ENCODE measurements at regions of chr11 and their contacts with region 1.

Region 1: DNA sequence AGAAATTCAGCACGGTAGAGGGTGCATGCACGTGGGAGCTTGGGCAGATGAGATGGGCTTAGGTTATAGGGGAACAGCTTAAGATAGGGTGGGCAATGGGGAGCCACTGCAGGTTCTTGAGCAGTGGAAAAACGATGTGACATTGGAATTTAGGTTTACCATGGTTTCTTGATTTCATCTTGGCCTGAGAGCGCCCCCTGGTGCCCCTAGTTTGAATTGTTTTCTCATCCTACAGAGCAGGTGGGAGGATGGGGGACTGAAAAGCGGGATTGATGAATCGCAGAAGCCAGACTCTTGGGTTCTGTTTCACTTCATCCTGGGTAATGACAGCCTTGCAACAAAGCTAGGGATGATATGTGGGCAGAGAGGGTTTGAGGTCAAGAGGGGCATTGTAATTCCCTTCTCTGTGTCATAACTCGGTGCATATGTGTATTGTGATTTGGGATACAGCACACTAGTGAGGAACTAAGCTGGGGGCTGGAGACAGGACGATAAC is 6.7 kb upstream of the MCAM start:
- DNase-seq: peak; percentile 94
- H3K4me3 Mint-ChIP-seq: no peak overlapping the region
- H3K27ac Mint-ChIP-seq: no peak overlapping the region
- H3K4me1 Mint-ChIP-seq: peaks cover 20% of the 10 kb centered on the region
- H3K27me3 Mint-ChIP-seq: peaks cover 9% of the 10 kb centered on the region

Region 2: DNA sequence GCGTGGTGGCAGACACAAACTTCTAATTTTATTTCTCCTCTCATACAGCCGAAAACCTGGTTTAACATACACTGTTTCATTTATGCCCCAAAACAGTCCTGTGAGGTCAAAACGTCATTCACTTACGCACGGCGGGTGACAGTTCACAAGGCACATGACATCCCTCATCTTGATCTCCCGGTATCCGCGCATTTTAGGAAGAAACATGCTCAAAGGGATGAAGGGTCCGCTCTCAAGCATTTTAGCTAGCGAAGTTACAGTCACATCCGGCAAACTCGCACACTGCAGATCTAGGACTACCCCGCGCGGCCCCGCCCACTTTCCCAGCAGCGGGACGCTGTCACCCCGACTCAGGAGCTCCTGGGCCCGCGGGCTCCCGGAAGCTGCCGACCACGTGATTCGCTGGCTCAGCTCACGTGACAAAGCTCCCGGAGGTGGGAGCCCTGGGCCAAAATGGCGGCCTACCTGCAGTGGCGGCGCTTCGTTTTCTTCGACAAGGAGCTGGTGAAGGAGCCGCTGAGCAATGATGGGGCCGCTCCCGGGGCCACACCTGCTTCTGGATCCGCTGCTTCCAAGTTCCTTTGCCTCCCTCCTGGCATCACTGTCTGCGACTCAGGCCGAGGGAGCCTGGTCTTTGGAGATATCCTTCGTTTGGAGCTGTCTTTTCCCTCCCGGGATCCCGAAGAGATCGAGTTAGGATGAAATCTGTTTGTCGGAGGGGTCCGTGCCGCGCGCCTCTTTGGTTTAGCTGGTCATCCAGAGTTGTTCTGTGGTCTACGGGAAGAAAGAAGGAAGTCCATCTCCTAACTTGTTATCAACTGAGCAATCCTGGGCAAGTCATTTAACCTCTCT is 256.0 kb before region 1 on chr11 and contains the start of gene VPS11:
- intact Hi-C with region 1: loop called (anchors 5 kb)
- DNase-seq: peak; percentile 99
- H3K4me3 Mint-ChIP-seq: peak within 1 kb of the TSS; percentile 92
- H3K27ac Mint-ChIP-seq: peak within 1 kb of the TSS; percentile 93
- H3K4me1 Mint-ChIP-seq: peaks cover 22% of the 10 kb centered on the region
- H3K27me3 Mint-ChIP-seq: no peaks in the 10 kb centered on the region
- total RNA-seq, gene VPS11: 20.2 and 20.9 TPM in 2 replicates

Region 3: GRCh38 chr11:119144825-119145486 is 178.6 kb before region 1 on chr11:
- intact Hi-C with region 1: loop called (anchors 5 kb)
- DNase-seq: peak; percentile 74
- H3K4me3 Mint-ChIP-seq: no peak overlapping the region
- H3K27ac Mint-ChIP-seq: no peak overlapping the region
- H3K4me1 Mint-ChIP-seq: peaks cover 6% of the 10 kb centered on the region
- H3K27me3 Mint-ChIP-seq: peaks cover 42% of the 10 kb centered on the region

Region 4: GRCh38 chr11:119205574-119206510 is 117.7 kb before region 1 on chr11 and contains the start of gene CBL:
- intact Hi-C with region 1: loop called (anchors 5 kb)
- DNase-seq: peak; percentile 98
- H3K4me3 Mint-ChIP-seq: peak within 1 kb of the TSS; percentile 99
- H3K27ac Mint-ChIP-seq: peak within 1 kb of the TSS; percentile 93
- H3K4me1 Mint-ChIP-seq: peaks cover 18% of the 10 kb centered on the region
- H3K27me3 Mint-ChIP-seq: no peaks in the 10 kb centered on the region
- total RNA-seq, gene CBL: 36.4 and 36.5 TPM in 2 replicates

Region 5: GRCh38 chr11:119306373-119306890 is 17.2 kb before region 1 on chr11:
- intact Hi-C with region 1: loop called (anchors 1 kb)
- DNase-seq: peak; percentile 75
- H3K4me3 Mint-ChIP-seq: peak overlapping the region; percentile 65
- H3K27ac Mint-ChIP-seq: peak overlapping the region; percentile 89
- H3K4me1 Mint-ChIP-seq: peaks cover 25% of the 10 kb centered on the region
- H3K27me3 Mint-ChIP-seq: no peaks in the 10 kb centered on the region